PC-9 (cell line): ENCODE measurements at regions of chr14 and their contacts with region 1.

Region 1: DNA sequence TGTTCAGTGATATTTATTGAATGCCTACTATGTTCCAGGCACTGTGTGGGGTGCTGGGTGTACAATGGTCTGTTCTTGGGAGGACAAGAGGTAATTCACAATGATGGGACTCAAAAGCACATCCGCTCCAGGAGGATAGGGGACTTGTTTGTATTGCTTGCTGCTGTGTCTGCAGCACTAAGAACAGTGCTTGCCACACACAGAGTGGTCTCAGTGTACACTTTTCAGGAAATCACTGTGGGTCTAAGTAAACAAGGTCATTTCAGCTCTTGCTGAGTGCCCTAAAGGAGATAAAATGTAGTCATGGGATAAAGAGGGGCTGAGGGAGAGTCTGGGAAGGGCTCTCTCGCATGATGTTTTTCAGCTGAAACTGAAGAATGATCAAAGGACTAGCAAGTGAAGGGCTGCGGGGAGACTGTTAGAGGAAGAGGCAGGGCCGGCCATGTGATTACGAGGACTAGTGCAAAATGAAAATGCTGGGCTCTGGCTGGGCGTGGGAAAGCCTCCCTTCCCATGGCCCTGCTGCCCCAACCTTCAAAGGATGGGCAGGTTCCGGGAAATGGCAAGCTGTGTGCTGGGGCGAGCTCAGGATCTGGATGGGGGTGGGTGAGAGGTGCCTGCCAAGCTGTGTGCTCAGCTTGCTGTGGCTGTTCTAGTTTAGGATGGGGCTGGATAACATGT is 39.1 kb downstream of the ADCK1 start:
- DNase-seq: no peak
- H3K4me3 ChIP-seq: no peak overlapping the region
- H3K27ac ChIP-seq: no peak overlapping the region
- H3K4me1 ChIP-seq: no peaks in the 10 kb centered on the region
- H3K27me3 ChIP-seq: no peaks in the 10 kb centered on the region
- CTCF ChIP-seq: no peak

Region 2: GRCh38 chr14:77889971-77890442 is 51.0 kb after region 1 on chr14:
- CTCF ChIA-PET with region 1: no interaction called
- POLR2A ChIA-PET with region 1: no interaction called
- intact Hi-C with region 1: loop called (anchors 2 kb)
- DNase-seq: no peak
- H3K4me3 ChIP-seq: no peak overlapping the region
- H3K27ac ChIP-seq: no peak overlapping the region
- H3K4me1 ChIP-seq: no peaks in the 10 kb centered on the region
- H3K27me3 ChIP-seq: no peaks in the 10 kb centered on the region
- CTCF ChIP-seq: no peak